ENCODE measurements at regions of chr19 and their contacts with region 1.

Region 1: GRCh38 chr19:16111160-16111908 is at the start of gene RAB8A:
- DNase-seq: peak; percentile 98 to 99
- ATAC-seq: peak; percentile 89
- total RNA-seq, gene RAB8A: 143 to 172 TPM

Region 2: GRCh38 chr19:16000024-16000687 is 111.2 kb before region 1 on chr19:
- intact Hi-C with region 1: no loop called
- DNase-seq: no peak
- ATAC-seq: no peak

Region 3: GRCh38 chr19:16041299-16041990 is 69.9 kb before region 1 on chr19:
- intact Hi-C with region 1: loop called in 1 of 2 experiments (anchors 10 kb)
- DNase-seq: peak; percentile 65 to 87
- ATAC-seq: peak; percentile 94

Region 4: DNA sequence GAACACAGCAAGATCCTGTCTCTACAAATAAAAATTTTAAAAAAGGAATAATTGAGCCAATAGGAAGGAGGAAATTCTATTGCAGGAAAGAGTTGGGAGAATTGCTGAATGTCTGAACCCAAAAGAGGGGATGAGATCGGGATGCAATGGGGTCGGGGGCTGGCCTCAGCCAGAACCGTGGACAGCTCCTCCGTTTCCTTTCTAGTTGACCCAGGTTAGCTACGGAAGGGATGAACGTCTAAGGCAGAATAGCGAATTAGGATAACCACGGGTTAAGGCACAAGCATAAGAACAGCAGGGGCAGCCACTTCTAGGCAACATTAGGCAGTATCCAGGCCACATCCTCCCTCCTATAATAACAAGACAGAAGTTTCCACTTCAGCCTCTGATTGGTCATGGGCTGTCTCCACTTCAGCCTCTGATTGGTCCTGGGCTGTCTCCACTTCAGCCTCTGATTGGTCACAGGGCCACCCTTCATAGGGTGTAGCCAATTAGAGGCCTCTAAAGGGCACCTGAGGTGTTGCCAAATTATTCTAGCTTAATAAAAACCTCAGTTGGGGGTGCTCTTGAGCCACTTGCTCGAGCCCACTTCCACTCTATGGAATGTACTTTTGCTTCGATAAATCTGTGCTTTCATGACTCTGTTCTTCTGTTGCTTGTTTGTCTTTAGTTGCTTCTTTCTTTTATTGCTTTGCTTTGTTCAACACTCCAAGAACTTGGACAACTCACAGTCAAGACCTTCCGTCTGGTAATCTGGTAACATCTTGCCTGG is 59.9 kb before region 1 on chr19:
- intact Hi-C with region 1: loop called (anchors 10 kb)
- DNase-seq: no peak
- ATAC-seq: no peak

Region 5: DNA sequence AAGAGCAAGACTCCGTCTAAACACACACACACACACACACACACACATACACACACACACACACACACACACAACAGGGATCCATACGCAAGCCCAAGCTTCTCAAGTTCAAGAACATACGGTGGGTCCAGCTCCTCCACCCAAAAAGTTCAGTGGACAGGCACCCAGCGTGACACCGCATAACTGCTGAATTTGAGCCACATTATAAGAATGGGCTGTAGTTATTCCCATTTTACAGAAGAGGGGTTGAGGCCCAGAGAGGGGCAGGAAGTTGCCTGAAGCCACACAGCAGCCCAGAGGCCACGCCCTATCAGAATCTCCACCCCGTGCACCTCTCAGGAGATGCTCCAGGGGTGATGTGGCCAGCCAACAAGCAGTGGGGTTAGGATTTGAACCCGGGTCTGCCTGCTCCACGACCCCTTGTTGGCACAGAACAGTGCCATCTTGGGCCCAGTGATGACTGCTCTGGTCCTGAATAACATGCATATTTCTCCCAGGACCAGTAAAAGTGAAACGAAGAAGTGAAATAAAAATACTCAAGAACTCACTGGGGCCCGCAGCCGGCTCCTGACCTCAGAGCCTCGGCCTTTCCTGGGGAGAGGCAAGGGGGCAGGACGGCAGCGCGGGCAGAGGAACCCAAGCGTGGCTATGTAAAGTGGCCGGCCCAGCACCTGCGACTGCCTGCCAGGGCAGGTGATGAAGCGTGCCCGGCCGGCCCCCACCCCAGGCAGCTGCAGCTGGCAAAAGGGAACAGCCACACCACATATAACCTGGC is 148.2 kb after region 1 on chr19:
- intact Hi-C with region 1: no loop called
- DNase-seq: peak; percentile 39 to 56
- ATAC-seq: peak; percentile 22